CD4-positive, alpha-beta T cell (primary cell): ENCODE measurements at regions of chr1 and their contacts with region 1.

Region 1: DNA sequence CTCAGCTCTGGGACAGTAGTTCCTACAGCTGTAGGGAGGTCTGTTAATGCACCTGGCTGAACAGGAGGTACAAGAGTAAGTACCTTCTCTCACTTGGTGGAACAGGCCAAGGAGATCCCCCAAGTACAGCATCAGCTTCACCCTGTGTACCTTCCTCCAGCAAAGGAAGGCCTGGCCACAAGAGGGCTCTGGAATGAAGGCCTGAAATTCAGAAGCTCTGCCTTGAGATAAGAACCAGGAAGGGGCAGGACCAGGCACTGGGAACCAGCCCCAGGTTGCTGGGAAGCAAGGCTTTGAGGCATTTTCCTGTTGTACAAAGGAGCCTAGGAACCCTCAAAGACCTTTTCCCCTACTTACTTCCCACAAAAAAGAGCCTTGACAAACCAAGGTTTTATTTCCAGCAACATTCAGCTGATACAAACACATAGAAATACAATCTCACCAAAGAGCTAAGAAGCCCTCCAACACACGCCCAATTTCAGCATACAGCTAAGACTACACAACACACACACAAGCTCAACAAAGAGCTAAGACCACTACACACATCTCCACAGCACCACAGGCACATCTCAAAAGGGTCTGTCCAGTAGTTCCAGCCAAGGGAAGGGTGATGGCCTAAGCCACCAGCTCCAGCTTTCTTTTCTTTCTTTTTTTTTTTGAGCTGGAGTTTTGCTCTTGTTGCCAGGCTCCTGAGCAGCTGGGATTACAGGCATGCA is 23.5 kb downstream of the F11R start:
- DNase-seq: peak in 13 of 14 experiments; percentile 23 to 75 (median 47)
- ATAC-seq: peak; percentile 78
- H3K4me3 ChIP-seq: no peak overlapping the region
- H3K4me3 Mint-ChIP-seq: no peak overlapping the region
- H3K27ac ChIP-seq: no peak overlapping the region
- H3K27ac Mint-ChIP-seq: no peak overlapping the region
- H3K4me1 ChIP-seq: peaks cover 5% of the 10 kb centered on the region
- H3K4me1 Mint-ChIP-seq: no peaks in the 10 kb centered on the region
- H3K27me3 ChIP-seq: no peaks in the 10 kb centered on the region
- H3K27me3 Mint-ChIP-seq: no peaks in the 10 kb centered on the region
- CTCF ChIP-seq: peak; percentile 56

Region 2: GRCh38 chr1:161021165-161021960 is 23.9 kb after region 1 on chr1:
- CTCF ChIA-PET with region 1: interaction called, 10 read pairs
- POLR2A ChIA-PET with region 1: interaction called, 10 read pairs
- intact Hi-C with region 1: no loop called
- DNase-seq: peak; percentile 79 to 96 (median 90)
- ATAC-seq: peak; percentile 95
- H3K4me3 ChIP-seq: peak overlapping the region; percentile 77
- H3K4me3 Mint-ChIP-seq: peak overlapping the region; percentile 91
- H3K27ac ChIP-seq: no peak overlapping the region
- H3K27ac Mint-ChIP-seq: peak overlapping the region; percentile 81
- H3K4me1 ChIP-seq: peaks cover 19% of the 10 kb centered on the region
- H3K4me1 Mint-ChIP-seq: peaks cover 25% of the 10 kb centered on the region
- H3K27me3 ChIP-seq: no peaks in the 10 kb centered on the region
- H3K27me3 Mint-ChIP-seq: no peaks in the 10 kb centered on the region
- CTCF ChIP-seq: no peak

Region 3: GRCh38 chr1:161038523-161039153 is 41.2 kb after region 1 on chr1 and contains the start of gene TSTD1:
- CTCF ChIA-PET with region 1: interaction called, 11 read pairs
- POLR2A ChIA-PET with region 1: interaction called, 7 read pairs
- intact Hi-C with region 1: loop called in 1 of 2 experiments (anchors 5 kb)
- DNase-seq: peak; percentile 75 to 96 (median 84)
- ATAC-seq: peak; percentile 89
- H3K4me3 ChIP-seq: peak within 1 kb of the TSS; percentile 99
- H3K4me3 Mint-ChIP-seq: peak within 1 kb of the TSS; percentile 88
- H3K27ac ChIP-seq: peak within 1 kb of the TSS; percentile 86 to 88
- H3K27ac Mint-ChIP-seq: peak within 1 kb of the TSS; percentile 91
- H3K4me1 ChIP-seq: peaks cover 50% of the 10 kb centered on the region
- H3K4me1 Mint-ChIP-seq: peaks cover 41% of the 10 kb centered on the region
- H3K27me3 ChIP-seq: no peaks in the 10 kb centered on the region
- H3K27me3 Mint-ChIP-seq: no peaks in the 10 kb centered on the region
- CTCF ChIP-seq: no peak
- total RNA-seq, gene TSTD1: 38.0 to 40.3 TPM

Region 4: GRCh38 chr1:161098210-161099068 is 101.0 kb after region 1 on chr1 and contains the start of gene KLHDC9:
- CTCF ChIA-PET with region 1: interaction called, 46 read pairs
- POLR2A ChIA-PET with region 1: interaction called, 20 read pairs
- intact Hi-C with region 1: loop called (anchors 1 kb)
- DNase-seq: peak; percentile 38 to 88 (median 58)
- ATAC-seq: peak; percentile 50
- H3K4me3 ChIP-seq: peak within 1 kb of the TSS; percentile 51
- H3K4me3 Mint-ChIP-seq: peak within 1 kb of the TSS; percentile 87
- H3K27ac ChIP-seq: peak within 1 kb of the TSS in 1 of 2 donors; percentile 52
- H3K27ac Mint-ChIP-seq: peak within 1 kb of the TSS; percentile 90
- H3K4me1 ChIP-seq: peaks cover 22% of the 10 kb centered on the region
- H3K4me1 Mint-ChIP-seq: peaks cover 23% of the 10 kb centered on the region
- H3K27me3 ChIP-seq: no peaks in the 10 kb centered on the region
- H3K27me3 Mint-ChIP-seq: peaks cover 6% of the 10 kb centered on the region
- CTCF ChIP-seq: peak; percentile 29
- total RNA-seq, gene KLHDC9: 0.41 TPM in 1 of 2 experiments, not detected in the other

Region 5: GRCh38 chr1:161139765-161140164 is 142.3 kb after region 1 on chr1:
- CTCF ChIA-PET with region 1: no interaction called
- POLR2A ChIA-PET with region 1: no interaction called
- intact Hi-C with region 1: loop called in 1 of 2 experiments (anchors 2 kb)
- DNase-seq: peak in 8 of 14 experiments; percentile 26 to 73 (median 50)
- ATAC-seq: peak; percentile 72
- H3K4me3 ChIP-seq: no peak overlapping the region
- H3K4me3 Mint-ChIP-seq: no peak overlapping the region
- H3K27ac ChIP-seq: no peak overlapping the region
- H3K27ac Mint-ChIP-seq: no peak overlapping the region
- H3K4me1 ChIP-seq: peaks cover 2% of the 10 kb centered on the region
- H3K4me1 Mint-ChIP-seq: peaks cover 6% of the 10 kb centered on the region
- H3K27me3 ChIP-seq: no peaks in the 10 kb centered on the region
- H3K27me3 Mint-ChIP-seq: no peaks in the 10 kb centered on the region
- CTCF ChIP-seq: peak; percentile 67

Region 6: GRCh38 chr1:161382214-161383019 is 384.9 kb after region 1 on chr1:
- CTCF ChIA-PET with region 1: no interaction called
- POLR2A ChIA-PET with region 1: no interaction called
- intact Hi-C with region 1: loop called in 1 of 2 experiments (anchors 2 kb)
- DNase-seq: peak in 3 of 14 experiments; percentile 69 to 72 (median 70)
- ATAC-seq: peak; percentile 83
- H3K4me3 ChIP-seq: no peak overlapping the region
- H3K4me3 Mint-ChIP-seq: no peak overlapping the region
- H3K27ac ChIP-seq: no peak overlapping the region
- H3K27ac Mint-ChIP-seq: no peak overlapping the region
- H3K4me1 ChIP-seq: peaks cover 6% of the 10 kb centered on the region
- H3K4me1 Mint-ChIP-seq: peaks cover 11% of the 10 kb centered on the region
- H3K27me3 ChIP-seq: no peaks in the 10 kb centered on the region
- H3K27me3 Mint-ChIP-seq: no peaks in the 10 kb centered on the region
- CTCF ChIP-seq: peak; percentile 79